ENCODE measurements at regions of chr1 and their contacts with region 1.

Region 1: GRCh38 chr1:28329395-28330153 is 734 bp downstream of the MED18 start:
- DNase-seq: no peak
- H3K4me3 ChIP-seq: peak overlapping the region; percentile 58 to 74 (median 70)
- H3K27ac ChIP-seq: peak overlapping the region; percentile 90 to 91
- H3K4me1 ChIP-seq: no peaks in the 10 kb centered on the region
- H3K27me3 ChIP-seq: no peaks in the 10 kb centered on the region
- CTCF ChIP-seq: peak in 1 of 3 donors; percentile 28
- POLR2A ChIP-seq: no peak

Region 2: DNA sequence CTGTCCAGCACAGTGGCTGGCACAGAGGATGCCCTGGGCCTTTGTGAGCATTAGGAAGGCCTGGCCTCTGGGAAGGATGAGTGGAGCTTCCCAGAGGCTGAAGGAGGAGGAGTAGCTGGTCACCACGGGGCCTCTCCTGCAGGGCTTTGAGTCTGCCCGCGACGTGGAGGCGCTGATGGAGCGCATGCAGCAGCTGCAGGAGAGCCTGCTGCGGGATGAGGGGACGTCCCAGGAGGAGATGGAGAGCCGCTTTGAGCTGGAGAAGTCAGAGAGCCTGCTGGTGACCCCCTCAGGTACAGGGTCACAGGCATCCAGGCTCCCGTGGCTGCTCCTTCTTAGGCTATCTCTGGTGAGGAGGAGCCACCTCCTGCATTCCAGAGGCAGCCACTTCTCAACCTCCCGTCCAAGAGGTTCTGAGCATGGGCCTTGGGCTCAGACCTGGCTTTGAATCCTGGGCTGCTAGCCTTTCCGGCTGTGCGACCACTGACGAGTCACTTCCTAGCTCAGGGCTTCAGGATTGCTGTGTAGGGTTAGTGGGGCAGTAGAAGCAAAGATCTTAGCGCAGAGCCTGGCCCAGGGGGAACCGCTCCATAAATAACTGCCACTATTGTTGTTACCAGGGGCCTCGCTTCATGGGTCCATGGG is 56.2 kb before region 1 on chr1:
- intact Hi-C with region 1: loop called (anchors 2 kb)
- DNase-seq: no peak
- H3K4me3 ChIP-seq: no peak overlapping the region
- H3K27ac ChIP-seq: no peak overlapping the region
- H3K4me1 ChIP-seq: no peaks in the 10 kb centered on the region
- H3K27me3 ChIP-seq: no peaks in the 10 kb centered on the region
- CTCF ChIP-seq: no peak
- POLR2A ChIP-seq: no peak